ENCODE measurements at regions of chr5 and their contacts with region 1.

Region 1: GRCh38 chr5:134637161-134637582 is 4.5 kb upstream of the SAR1B start:
- DNase-seq: no peak
- ATAC-seq: no peak
- H3K4me3 ChIP-seq: no peak overlapping the region
- H3K27ac ChIP-seq: no peak overlapping the region
- H3K4me1 ChIP-seq: no peaks in the 10 kb centered on the region
- H3K27me3 ChIP-seq: no peaks in the 10 kb centered on the region

Region 2: DNA sequence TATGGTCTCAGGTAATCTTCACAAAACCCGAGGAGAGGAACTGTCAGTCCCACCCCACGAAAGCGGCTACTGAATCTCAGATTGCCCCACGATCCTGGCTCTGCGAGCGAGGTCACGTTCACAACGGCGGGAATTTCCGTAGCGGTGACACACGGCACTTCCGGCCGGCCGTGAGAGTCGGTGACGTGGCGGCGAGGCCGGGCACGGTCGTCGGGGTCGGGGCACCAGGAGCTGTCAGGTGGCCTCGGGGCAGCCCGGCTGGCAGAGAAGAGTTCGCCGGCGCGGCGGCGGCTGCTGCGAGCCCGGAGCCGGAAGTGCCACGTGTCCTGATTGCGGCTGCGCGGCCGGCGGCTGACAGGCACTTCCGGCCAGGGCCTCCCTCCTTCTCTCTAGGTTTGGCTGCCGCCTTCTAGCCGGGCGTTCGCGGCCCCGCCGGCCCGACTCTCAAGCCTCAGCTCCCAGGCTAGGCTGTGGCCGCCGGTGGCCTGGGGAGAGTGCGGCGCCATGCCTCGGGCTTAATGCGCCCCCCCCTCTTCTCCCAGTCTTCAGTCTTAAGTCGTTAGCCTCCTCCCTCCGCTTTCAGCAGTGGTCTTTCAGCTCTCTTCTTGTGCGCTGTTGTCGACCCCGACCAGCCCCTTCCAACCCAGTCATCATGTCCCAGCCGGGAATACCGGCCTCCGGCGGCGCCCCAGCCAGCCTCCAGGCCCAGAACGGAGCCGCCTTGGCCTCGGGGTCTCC is 11.4 kb after region 1 on chr5 and contains the start of gene SEC24A:
- intact Hi-C with region 1: loop called in 1 of 2 experiments (anchors 1 kb)
- DNase-seq: peak; percentile 93 to 98
- ATAC-seq: peak; percentile 96
- H3K4me3 ChIP-seq: peak within 1 kb of the TSS; percentile 74 to 84
- H3K27ac ChIP-seq: peak within 1 kb of the TSS; percentile 84 to 96
- H3K4me1 ChIP-seq: peaks cover 0 to 2% of the 10 kb centered on the region in 2 donors
- H3K27me3 ChIP-seq: no peaks in the 10 kb centered on the region
- total RNA-seq, gene SEC24A: 28.8 to 32.0 TPM